PC-3 (cell line): ENCODE measurements at regions of chr19 and their contacts with region 1.

Region 1: DNA sequence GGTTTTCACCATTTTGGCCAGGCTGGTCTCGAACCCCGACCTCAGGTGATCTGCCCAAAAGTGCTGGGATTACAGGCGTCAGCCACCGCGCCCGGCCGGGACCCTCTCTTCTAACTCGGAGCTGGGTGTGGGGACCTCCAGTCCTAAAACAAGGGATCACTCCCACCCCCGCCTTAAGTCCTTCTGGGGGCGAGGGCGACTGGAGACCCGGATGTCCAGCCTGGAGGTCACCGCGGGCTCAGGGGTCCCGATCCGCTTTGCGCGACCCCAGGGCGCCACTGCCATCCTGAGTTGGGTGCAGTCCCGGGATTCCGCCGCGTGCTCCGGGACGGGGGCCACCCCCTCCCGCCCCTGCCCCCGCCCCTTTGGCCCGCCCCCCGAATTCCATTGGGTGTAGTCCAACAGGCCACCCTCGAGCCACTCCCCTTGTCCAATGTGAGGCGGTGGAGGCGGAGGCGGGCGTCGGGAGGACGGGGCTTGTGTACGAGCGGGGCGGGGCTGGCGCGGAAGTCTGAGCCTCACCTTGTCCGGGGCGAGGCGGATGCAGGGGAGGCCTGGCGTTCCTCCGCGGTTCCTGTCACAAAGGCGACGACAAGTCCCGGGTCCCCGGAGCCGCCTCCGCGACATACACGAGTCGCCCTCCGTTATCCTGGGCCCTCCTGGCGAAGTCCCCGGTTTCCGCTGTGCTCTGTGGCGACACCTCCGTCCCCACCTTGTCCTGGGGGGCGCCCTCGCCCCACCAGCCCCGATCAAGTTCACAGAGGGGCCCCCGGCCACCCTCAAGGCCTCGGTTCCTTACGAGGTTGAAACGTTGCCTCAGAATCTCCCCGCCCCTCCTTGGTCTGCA is 1.0 kb downstream of the LDLR start:
- DNase-seq: peak; percentile 98
- ATAC-seq: peak; percentile 72
- H3K4me3 ChIP-seq: peak overlapping the region; percentile 98
- H3K27ac ChIP-seq: peak overlapping the region; percentile 93
- H3K4me1 ChIP-seq: peaks cover 42% of the 10 kb centered on the region
- H3K27me3 ChIP-seq: no peaks in the 10 kb centered on the region
- CTCF ChIP-seq: 0 out of 2 replicates have a peak, but pooled peaks have one; percentile 23

Region 2: DNA sequence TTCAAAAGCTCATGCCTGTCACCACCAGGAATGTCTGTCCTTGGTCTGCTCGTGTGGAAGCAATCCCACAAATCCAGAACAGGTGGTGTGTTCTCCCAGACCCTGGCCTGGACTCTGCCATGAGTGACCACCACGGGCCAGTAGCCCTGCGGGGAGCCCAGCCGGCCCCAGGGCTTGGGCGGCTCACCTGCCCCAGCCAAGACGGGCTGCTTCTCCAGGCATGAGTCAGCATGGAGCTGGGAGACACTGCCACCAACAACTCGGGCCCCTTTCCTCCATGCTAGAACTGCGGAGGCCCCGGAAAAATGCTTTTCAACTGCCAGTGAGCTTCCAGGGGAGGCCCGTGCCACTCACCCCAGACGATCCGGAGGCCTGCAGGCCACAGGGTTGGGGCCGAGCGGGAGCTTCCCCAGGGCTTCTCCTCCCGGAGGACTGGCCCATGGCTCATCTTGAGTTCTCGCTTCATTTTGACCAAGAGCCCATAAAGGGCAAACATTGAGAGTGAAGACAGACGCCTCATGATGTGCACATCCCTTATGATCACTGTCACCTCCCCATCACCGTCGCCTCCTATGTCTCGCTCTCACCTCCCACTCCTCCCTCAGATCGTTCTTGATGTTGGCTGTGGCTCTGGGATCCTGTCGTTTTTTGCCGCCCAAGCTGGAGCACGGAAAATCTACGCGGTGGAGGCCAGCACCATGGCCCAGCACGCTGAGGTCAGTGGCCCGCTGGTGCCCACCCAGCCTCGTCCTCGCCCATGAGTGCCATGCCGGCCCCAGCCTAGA is 178.5 kb before region 1 on chr19:
- CTCF ChIA-PET with region 1: no interaction called
- POLR2A ChIA-PET with region 1: no interaction called
- intact Hi-C with region 1: no loop called
- DNase-seq: no peak
- ATAC-seq: no peak
- H3K4me3 ChIP-seq: no peak overlapping the region
- H3K27ac ChIP-seq: no peak overlapping the region
- H3K4me1 ChIP-seq: peaks cover 15% of the 10 kb centered on the region
- H3K27me3 ChIP-seq: no peaks in the 10 kb centered on the region
- CTCF ChIP-seq: no peak

Region 3: DNA sequence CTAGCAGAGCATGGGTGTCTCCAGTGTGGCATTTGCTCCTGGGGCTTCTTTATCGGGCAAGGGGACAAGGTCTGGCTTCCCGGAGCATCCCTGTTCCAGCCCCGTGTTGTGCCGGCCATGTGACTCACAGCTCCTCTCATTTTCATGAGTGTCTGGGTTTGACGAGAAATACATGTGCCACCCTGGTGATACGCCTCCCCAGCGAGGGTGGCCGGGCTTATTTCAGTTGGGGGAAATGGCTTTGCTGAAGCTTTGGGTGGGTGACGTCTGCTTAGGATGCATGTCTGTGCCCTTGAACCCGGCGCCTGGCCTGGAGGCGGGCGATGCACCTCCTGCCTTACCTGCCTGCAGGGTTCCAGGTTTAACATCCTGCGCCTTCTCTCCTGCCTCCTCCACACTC is 62.9 kb before region 1 on chr19:
- CTCF ChIA-PET with region 1: no interaction called
- POLR2A ChIA-PET with region 1: no interaction called
- intact Hi-C with region 1: no loop called
- DNase-seq: no peak
- ATAC-seq: no peak
- H3K4me3 ChIP-seq: no peak overlapping the region
- H3K27ac ChIP-seq: no peak overlapping the region
- H3K4me1 ChIP-seq: no peaks in the 10 kb centered on the region
- H3K27me3 ChIP-seq: no peaks in the 10 kb centered on the region
- CTCF ChIP-seq: no peak

Region 4: GRCh38 chr19:12484371-12485051 is 1394.2 kb after region 1 on chr19 and contains the start of gene ZNF709:
- CTCF ChIA-PET with region 1: no interaction called
- POLR2A ChIA-PET with region 1: interaction called, 12 read pairs
- intact Hi-C with region 1: no loop called
- DNase-seq: peak; percentile 88
- ATAC-seq: peak; percentile 98
- H3K4me3 ChIP-seq: peak within 1 kb of the TSS; percentile 93
- H3K27ac ChIP-seq: no peak within 1 kb of the TSS
- H3K4me1 ChIP-seq: 0 out of 2 replicates have a peak, but pooled peaks cover 6% of the 10 kb centered on the region
- H3K27me3 ChIP-seq: no peaks in the 10 kb centered on the region
- CTCF ChIP-seq: no peak
- total RNA-seq, gene ZNF709: 0.77 and 2.2 TPM in 2 replicates